ENCODE measurements at regions of chr22 and their contacts with region 1.

Region 1: GRCh38 chr22:34966980-34967565 is 98.9 kb upstream of the ISX start:
- DNase-seq: no peak
- ATAC-seq: no peak
- H3K4me3 ChIP-seq: no peak overlapping the region
- H3K27ac ChIP-seq: no peak overlapping the region
- H3K4me1 ChIP-seq: no peaks in the 10 kb centered on the region
- H3K27me3 ChIP-seq: no peaks in the 10 kb centered on the region
- CTCF ChIP-seq: no peak

Region 2: DNA sequence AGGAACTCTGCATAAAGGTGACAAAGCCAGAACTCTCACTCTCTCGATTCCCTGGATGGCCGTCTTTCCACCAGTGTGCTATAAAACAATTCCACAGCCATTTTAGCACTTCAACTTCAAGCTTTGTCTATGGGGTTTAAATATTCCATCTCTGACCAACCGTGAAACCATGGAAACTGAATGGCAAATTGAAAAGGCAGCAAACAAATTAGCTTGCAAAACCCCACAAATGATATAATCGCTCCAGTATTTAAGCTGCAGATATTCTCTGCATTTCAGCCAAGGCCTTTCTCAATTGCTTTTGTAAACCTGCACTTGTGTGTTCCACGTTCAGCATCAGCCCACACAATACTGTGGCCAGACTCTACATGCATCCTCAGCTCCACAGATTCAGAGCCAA is 32.8 kb before region 1 on chr22:
- CTCF ChIA-PET with region 1: no interaction called
- POLR2A ChIA-PET with region 1: no interaction called
- in situ Hi-C with region 1: no loop called
- intact Hi-C with region 1: no loop called
- DNase-seq: no peak
- ATAC-seq: no peak
- H3K4me3 ChIP-seq: no peak overlapping the region
- H3K27ac ChIP-seq: no peak overlapping the region
- H3K4me1 ChIP-seq: no peaks in the 10 kb centered on the region
- H3K27me3 ChIP-seq: no peaks in the 10 kb centered on the region
- CTCF ChIP-seq: no peak

Region 3: DNA sequence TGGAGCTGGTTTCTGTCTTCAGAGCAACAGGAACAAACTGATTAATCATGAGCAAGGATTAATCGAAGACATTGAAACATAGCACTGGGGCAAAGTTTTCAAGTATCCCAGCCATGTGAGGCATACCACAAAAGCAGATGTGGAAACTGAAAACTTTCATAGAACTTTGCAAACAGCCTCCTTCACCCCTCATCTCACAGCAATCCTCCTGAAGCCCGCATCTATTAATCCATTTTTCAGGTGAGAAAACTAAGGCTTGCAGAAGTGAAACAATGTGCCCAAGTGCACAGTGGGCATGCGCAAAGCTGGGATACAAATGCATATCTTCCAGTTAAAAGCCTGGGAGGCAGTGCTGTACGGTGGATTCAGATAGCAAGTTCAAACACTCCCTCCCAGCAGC is 231.7 kb after region 1 on chr22:
- CTCF ChIA-PET with region 1: no interaction called
- POLR2A ChIA-PET with region 1: interaction called, 20 read pairs
- in situ Hi-C with region 1: no loop called
- intact Hi-C with region 1: no loop called
- DNase-seq: no peak
- ATAC-seq: no peak
- H3K4me3 ChIP-seq: no peak overlapping the region
- H3K27ac ChIP-seq: no peak overlapping the region
- H3K4me1 ChIP-seq: no peaks in the 10 kb centered on the region
- H3K27me3 ChIP-seq: no peaks in the 10 kb centered on the region
- CTCF ChIP-seq: no peak